ENCODE measurements at regions of chr4 and their contacts with region 1.

Region 1: DNA sequence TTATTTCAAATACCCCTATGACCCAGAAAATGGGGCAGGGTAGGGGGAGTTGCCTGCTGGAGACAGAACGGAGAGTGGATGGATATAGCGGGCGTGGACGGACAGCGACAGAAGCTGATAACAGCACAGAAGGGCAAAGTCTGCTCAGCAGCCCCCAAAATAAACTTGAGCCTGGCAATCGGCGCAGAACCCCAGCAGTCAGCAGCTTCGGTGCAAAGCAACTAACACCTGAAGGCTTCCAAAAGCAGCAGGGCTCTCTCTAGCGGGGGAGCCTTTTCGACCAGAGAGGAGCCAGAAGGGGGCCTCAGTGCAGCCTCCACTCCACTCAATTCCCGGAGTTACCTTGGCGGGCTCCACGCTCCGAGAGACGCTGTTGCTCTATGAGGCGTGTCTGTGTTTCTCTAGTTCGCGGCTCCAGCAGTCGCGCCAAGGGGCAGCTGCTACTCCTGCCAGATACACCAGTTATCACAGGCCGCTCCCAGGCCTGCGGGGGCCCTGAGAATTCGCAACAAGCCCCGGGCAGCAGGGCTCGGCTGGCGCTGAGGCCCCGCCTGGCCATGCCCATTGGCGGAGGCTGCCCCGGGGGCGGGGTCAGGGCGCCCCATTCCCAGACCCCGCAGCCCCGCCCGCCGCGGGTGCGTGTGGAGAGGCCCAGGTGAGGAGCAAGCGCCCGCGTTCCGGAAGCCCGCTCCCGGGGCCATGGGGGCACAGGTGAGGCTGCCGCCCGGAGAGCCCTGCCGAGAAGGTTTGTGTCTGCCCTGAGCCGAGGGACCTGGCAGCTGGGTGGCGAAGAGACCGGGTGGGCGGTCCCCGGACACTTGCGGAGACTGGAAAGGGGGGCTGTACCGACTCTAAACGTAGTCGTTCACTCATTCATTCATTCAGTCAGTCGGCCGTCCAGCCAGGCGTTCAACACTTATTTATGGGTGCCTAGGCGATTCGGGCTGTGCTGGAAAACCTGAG is at the starts of genes CNGA1 and NIPAL1:
- DNase-seq: peak; percentile 72
- H3K4me3 Mint-ChIP-seq: peak within 1 kb of the TSS; percentile 81
- H3K27ac Mint-ChIP-seq: peak within 1 kb of the TSS; percentile 46
- H3K4me1 Mint-ChIP-seq: peaks cover 26% of the 10 kb centered on the region
- H3K27me3 Mint-ChIP-seq: peaks cover 5% of the 10 kb centered on the region
- total RNA-seq, gene CNGA1: 0.26 to 0.94 TPM
- total RNA-seq, gene NIPAL1: 1.0 to 2.0 TPM

Region 2: DNA sequence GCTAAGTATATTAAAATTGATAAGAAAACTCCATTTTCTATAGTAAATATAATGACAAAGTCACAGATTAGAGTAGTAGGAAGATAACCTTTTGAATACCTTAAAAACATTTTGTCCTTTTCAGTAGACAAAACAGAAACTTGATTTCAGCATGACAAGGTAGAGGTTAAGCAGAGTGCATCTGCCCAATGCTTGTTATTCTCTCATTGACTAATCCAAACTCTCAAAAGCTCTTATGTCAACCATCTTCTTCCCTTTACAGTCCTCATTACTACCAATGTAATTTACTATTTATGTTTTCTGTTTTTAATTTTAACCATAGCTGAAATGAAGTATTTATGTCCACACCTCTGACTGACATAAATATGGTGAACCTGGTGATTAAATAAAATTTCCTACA is 11.2 kb after region 1 on chr4:
- CTCF ChIA-PET with region 1: interaction called, 48 read pairs
- intact Hi-C with region 1: no loop called
- DNase-seq: no peak
- H3K4me3 Mint-ChIP-seq: no peak overlapping the region
- H3K27ac Mint-ChIP-seq: no peak overlapping the region
- H3K4me1 Mint-ChIP-seq: peaks cover 24% of the 10 kb centered on the region
- H3K27me3 Mint-ChIP-seq: no peaks in the 10 kb centered on the region

Region 3: GRCh38 chr4:48047421-48047844 is 31.0 kb after region 1 on chr4:
- CTCF ChIA-PET with region 1: interaction called, 5 read pairs
- intact Hi-C with region 1: loop called (anchors 1 kb)
- DNase-seq: peak; percentile 91
- H3K4me3 Mint-ChIP-seq: peak overlapping the region; percentile 1
- H3K27ac Mint-ChIP-seq: no peak overlapping the region
- H3K4me1 Mint-ChIP-seq: peaks cover 58% of the 10 kb centered on the region
- H3K27me3 Mint-ChIP-seq: no peaks in the 10 kb centered on the region

Measured in activated naive CD4-positive, alpha-beta T cell treated with anti-CD3 and anti-CD28 coated beads for 36 hours (primary cell).